Activated CD8-positive, alpha-beta T cell treated with anti-CD3 and anti-CD28 coated beads for 36 hours (primary cell): ENCODE measurements at regions of chr21 and their contacts with region 1.

Region 1: DNA sequence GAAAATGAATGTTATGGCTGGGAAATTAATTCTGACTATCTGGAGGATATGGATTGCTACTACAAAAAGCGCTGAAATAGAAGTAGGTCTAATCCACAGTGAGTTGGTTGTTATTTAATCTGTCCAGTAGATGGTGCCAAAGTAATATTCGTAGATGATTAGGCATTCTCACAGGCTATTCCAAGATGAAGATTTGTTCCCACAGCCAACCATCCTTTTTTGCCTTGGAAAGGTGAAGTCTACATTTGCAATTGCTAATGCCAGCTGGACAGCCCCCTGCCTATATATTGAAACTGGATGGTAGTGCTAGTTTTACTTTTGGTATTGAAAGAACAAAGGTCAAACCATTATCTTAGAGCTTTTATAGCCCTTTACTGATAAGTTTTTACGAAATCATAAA is 43.8 kb downstream of the RBM11 start:
- DNase-seq: no peak
- ATAC-seq: peak; percentile 34
- H3K4me3 Mint-ChIP-seq: no peak overlapping the region
- H3K27ac Mint-ChIP-seq: no peak overlapping the region
- H3K4me1 Mint-ChIP-seq: peaks cover 5% of the 10 kb centered on the region
- H3K27me3 Mint-ChIP-seq: peaks cover 3% of the 10 kb centered on the region
- CTCF ChIP-seq: peak; percentile 37

Region 2: GRCh38 chr21:14206222-14206621 is 53.5 kb before region 1 on chr21:
- CTCF ChIA-PET with region 1: no interaction called
- POLR2A ChIA-PET with region 1: no interaction called
- intact Hi-C with region 1: no loop called
- DNase-seq: no peak
- ATAC-seq: no peak
- H3K4me3 Mint-ChIP-seq: no peak overlapping the region
- H3K27ac Mint-ChIP-seq: no peak overlapping the region
- H3K4me1 Mint-ChIP-seq: no peaks in the 10 kb centered on the region
- H3K27me3 Mint-ChIP-seq: peaks cover 3% of the 10 kb centered on the region
- CTCF ChIP-seq: no peak

Region 3: DNA sequence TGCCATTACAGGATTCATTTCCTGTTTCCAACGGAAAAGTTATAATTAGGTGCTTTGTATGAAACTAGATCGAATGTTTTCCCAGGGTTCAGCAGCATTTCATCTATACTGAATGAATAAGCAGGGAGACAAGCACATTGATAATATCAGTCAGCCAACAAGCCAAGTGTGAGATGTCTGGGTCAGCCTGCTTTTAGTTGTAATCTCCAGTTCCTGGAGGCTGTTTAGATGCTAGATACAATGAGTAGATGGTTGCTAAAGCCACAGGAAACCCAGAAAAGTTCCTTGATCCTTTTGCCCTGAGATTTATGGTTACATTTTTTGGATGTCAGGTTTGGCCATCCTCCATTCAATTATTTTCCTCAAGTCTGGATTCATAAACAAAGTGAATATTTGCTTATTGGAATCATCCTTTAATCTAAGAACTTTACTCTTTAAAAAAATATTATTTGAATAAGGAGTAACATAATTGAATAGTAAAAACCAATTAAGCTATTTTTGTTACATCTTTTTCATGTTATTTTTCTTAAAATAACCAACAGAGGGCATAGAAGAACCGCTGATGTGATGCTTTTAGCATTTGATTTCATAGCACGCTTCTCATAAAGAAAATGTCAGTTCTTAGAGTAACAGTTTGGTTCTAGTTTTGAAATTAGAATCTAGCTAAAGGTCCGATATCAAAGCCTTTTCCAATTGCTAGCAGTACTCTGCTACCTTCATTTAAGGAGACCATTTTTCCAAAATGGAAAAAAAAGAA is 46.6 kb after region 1 on chr21:
- CTCF ChIA-PET with region 1: no interaction called
- POLR2A ChIA-PET with region 1: no interaction called
- intact Hi-C with region 1: no loop called
- DNase-seq: no peak
- ATAC-seq: no peak
- H3K4me3 Mint-ChIP-seq: no peak overlapping the region
- H3K27ac Mint-ChIP-seq: no peak overlapping the region
- H3K4me1 Mint-ChIP-seq: no peaks in the 10 kb centered on the region
- H3K27me3 Mint-ChIP-seq: peaks cover 7% of the 10 kb centered on the region
- CTCF ChIP-seq: peak; percentile 29

Region 4: DNA sequence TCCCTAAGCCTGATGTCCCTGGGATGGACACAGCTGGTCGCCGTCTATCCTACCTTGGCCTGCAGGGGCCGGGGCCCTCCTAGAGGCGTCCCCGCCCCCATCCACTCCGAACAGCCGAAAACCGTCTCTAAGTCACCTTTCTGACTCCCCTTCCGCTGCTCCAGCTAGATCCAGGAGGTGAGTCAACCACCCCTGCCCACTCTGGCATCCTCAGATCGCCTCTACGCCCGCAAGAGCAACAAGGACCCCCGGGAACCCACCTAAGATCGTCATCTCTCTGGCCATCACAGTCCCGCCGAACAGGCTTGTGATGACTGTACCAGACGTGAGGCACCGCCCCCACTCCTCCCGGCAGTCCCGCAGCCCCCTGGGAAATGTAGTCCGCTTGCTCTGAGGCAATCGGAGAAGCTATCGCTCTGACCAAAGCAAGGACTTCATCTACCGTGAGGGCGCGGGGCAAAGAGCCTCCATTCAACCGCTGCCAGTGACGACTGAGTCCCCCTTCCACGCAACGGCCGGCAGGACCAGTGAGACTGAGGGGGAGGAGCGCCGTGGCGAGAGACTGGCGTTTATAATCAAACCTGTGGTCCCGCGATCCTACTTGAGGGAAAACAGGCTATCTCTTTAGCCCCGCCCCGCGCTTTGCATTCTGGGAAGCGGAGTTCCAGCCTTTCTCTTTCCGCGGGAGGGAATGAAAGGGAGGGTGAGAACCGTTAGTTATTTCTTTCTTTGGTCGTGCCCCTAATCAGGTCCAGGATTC is 123.3 kb after region 1 on chr21 and contains the start of gene HSPA13:
- CTCF ChIA-PET with region 1: interaction called, 10 read pairs
- POLR2A ChIA-PET with region 1: no interaction called
- intact Hi-C with region 1: no loop called
- DNase-seq: peak; percentile 100
- ATAC-seq: peak; percentile 96
- H3K4me3 Mint-ChIP-seq: peak within 1 kb of the TSS; percentile 92
- H3K27ac Mint-ChIP-seq: peak within 1 kb of the TSS; percentile 97
- H3K4me1 Mint-ChIP-seq: peaks cover 30% of the 10 kb centered on the region
- H3K27me3 Mint-ChIP-seq: no peaks in the 10 kb centered on the region
- CTCF ChIP-seq: no peak
- total RNA-seq, gene HSPA13: 37.1 to 39.8 TPM